Left cardiac atrium (tissue), 4 donors: ENCODE measurements at regions of chr12 and their contacts with region 1.

Region 1: GRCh38 chr12:86914716-86915115 is 658.5 kb upstream of the MGAT4C start:
- DNase-seq: no peak
- ATAC-seq: peak; percentile 25 to 76

Region 2: DNA sequence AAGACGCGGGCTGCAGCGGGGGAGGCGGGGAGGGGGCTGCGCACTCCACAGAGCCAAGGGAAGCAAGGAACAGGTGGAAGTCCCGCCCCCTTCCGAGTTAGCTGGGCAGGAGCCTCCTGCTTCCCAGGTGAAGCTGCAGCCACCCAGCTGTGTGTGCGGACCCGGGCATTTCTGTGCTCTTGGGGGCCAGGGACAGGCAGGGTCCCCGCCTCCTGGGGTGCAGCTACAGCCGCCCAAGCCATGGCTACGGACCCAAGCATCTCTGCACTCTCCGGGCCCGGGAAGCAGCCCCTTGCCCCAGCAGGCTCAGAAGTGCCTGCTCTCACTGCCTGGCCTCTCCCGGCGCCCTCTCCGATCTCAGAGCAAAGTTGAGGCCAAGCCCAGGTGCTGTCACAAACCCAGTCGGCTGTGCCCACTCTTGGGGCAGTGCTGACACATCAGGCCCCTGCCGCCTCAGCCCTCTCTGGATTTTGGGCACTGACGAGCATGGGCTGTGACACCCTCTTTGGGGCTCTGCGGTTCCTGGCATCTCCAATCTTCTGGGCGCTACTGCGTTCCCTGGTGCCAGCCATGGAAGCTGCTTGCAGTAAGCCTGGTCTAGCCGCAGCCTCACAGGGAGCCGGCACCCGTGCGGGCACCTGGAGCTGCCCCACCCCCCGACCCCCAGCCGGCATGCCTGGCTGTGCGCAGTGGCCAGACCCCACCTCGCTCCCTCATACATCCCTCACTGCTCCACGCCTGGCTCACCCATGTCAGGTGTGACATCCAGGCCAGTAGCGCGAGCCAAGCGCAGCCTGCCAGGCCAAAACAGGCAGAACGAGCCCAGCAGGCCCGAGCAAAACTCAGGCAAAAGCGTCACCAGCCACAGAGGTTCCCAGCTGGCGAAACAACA is 650.0 kb before region 1 on chr12:
- intact Hi-C with region 1: loop called in 1 of 2 experiments (anchors 5 kb)
- DNase-seq: peak; percentile 19
- ATAC-seq: peak; percentile 53 to 75

Region 3: DNA sequence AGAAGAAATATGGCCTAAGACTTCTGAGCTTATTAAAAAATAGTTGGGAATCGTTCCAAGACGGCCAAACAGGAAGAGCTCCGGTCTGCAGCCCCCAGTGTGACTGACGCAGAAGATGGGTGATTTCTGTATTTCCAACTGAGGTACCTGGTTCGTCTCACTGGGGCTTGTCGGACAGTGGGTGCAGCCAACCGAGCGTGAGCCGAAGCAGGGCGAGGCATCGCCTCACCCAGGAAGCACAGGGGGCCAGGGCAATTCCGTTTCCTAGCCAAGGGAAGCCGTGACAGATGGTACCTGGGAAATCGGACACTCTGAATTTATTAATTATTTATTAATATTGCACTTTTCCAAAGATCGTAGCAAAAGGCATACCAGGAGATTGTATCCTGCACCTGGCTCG is 256.6 kb after region 1 on chr12:
- intact Hi-C with region 1: no loop called
- DNase-seq: no peak
- ATAC-seq: no peak